ENCODE measurements at regions of chr11 and their contacts with region 1.

Region 1: GRCh38 chr11:62665075-62665598 is at the starts of genes C11orf98 and CSKMT:
- DNase-seq: peak; percentile 95
- H3K4me3 ChIP-seq: peak within 1 kb of the TSS; percentile 42 to 83 (median 59)
- H3K27ac ChIP-seq: peak within 1 kb of the TSS; percentile 44
- H3K4me1 ChIP-seq: peaks cover 16% of the 10 kb centered on the region
- H3K27me3 ChIP-seq: no peaks in the 10 kb centered on the region
- CTCF ChIP-seq: no peak
- POLR2A ChIP-seq: peak; percentile 100
- total RNA-seq, gene C11orf98: 58.7 and 61.0 TPM in 2 replicates
- total RNA-seq, gene CSKMT: 28.4 and 38.1 TPM in 2 replicates

Region 2: GRCh38 chr11:62591448-62592145 is 73.5 kb before region 1 on chr11 and contains the start of gene TUT1:
- CTCF ChIA-PET with region 1: interaction called, 7 read pairs
- POLR2A ChIA-PET with region 1: interaction called, 36 read pairs
- dilution Hi-C with region 1: no loop called
- intact Hi-C with region 1: no loop called
- DNase-seq: peak; percentile 99
- H3K4me3 ChIP-seq: peak within 1 kb of the TSS; percentile 67 to 87 (median 82)
- H3K27ac ChIP-seq: peak within 1 kb of the TSS; percentile 82
- H3K4me1 ChIP-seq: peaks cover 18% of the 10 kb centered on the region
- H3K27me3 ChIP-seq: no peaks in the 10 kb centered on the region
- CTCF ChIP-seq: no peak
- POLR2A ChIP-seq: peak; percentile 99
- total RNA-seq, gene TUT1: 16.9 and 17.8 TPM in 2 replicates

Region 3: DNA sequence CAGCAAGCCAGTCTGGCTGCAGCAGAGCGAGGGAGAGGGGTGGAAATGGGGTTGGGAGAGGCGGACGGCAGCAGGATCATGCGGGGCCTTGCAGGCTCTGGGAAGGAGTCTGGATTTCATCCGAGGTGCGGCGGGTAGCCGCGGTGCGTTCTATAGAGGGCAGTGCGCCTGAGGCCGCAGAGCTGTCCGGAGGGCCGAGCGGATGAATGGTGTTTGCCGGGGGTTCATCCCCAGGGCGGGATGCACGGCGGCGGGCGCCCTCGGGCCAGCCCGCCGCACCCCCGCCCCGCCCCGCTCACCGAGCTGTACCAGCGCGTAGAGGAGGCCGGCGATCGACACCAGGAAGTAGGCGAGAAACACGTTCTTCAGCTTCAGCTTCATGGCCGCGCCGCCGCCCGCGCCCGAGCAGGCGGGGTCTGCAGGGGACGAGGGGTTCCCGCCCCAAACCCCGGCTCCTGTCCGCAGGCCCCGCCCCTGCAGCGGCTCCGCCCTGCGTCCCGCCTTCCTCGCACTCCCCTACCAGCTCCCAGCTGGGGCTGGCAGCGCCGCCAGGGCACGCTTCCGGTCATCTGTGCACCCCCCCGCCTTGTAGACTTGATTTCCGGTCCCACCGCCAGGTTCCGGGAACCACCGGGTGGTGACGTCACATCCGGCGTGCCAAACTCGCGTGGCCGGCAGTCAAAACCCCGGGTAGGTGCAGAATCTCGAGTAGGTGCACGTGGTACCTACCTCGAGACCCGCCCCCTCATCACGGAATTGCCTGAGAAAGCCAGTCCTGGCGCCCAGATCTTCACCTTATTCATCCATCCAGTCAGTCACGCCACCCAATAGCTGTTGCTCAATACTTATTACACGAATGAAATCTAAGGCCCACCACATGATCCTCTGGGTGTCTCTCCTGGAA is 43.3 kb before region 1 on chr11 and contains the start of gene B3GAT3:
- CTCF ChIA-PET with region 1: interaction called, 3 read pairs
- POLR2A ChIA-PET with region 1: interaction called, 14 read pairs
- dilution Hi-C with region 1: no loop called
- intact Hi-C with region 1: no loop called
- DNase-seq: peak; percentile 96
- H3K4me3 ChIP-seq: peak within 1 kb of the TSS; percentile 14 to 80 (median 66)
- H3K27ac ChIP-seq: peak within 1 kb of the TSS; percentile 88
- H3K4me1 ChIP-seq: peaks cover 15% of the 10 kb centered on the region
- H3K27me3 ChIP-seq: no peaks in the 10 kb centered on the region
- CTCF ChIP-seq: no peak
- POLR2A ChIP-seq: peak; percentile 95
- total RNA-seq, gene B3GAT3: 31.6 and 35.0 TPM in 2 replicates

Region 4: DNA sequence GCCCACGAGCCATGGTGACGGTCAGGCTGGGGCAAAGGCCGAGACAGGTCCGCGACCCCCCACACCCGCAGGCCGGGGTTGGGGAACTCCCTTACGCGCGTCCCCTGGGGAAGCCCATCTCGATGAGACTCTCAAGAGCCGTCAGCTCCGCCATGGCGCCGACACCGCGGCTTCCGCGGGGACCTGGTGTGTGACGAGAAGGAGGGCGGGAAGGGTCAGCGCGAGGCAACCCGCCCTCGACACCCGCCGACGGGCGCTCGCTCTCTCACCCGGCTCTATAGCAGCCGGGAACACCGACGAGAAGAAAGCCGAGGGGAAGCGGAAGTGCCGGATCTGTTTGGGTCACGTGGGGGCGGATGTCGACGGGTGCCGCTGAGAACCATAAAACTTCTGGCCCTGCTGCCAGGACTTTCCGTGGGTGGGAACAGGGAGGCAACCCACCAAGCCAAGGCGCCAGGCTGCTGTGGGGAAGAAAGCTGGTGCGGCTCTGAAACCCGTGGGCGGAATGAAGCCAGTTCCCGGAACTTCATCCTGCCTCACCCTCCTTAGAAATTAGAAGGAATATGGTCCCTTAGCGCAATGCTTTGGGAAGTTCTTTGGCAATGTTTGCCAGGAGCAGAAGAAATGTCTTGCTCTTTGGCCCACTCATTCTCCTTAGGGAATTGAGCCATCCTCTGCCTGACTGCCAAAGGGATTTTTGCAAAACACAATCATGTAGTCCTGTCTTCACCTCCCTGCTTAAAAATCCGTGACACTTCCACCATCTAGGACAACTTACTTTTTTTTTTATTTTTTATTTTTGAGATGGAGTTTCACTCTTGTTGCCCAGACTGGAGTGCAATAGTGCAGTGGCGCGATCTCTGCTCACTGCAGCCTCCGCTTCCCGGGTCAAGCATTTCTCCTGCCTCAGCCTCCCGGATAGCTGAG is 13.9 kb after region 1 on chr11 and contains the start of gene UBXN1:
- CTCF ChIA-PET with region 1: interaction called, 30 read pairs
- POLR2A ChIA-PET with region 1: interaction called, 33 read pairs
- dilution Hi-C with region 1: no loop called
- intact Hi-C with region 1: loop called (anchors 2 kb)
- DNase-seq: peak; percentile 89
- H3K4me3 ChIP-seq: peak within 1 kb of the TSS; percentile 76 to 93 (median 79)
- H3K27ac ChIP-seq: peak within 1 kb of the TSS; percentile 74
- H3K4me1 ChIP-seq: peaks cover 11% of the 10 kb centered on the region
- H3K27me3 ChIP-seq: no peaks in the 10 kb centered on the region
- CTCF ChIP-seq: no peak
- POLR2A ChIP-seq: peak; percentile 84
- total RNA-seq, gene UBXN1: 112 and 113 TPM in 2 replicates

Region 5: DNA sequence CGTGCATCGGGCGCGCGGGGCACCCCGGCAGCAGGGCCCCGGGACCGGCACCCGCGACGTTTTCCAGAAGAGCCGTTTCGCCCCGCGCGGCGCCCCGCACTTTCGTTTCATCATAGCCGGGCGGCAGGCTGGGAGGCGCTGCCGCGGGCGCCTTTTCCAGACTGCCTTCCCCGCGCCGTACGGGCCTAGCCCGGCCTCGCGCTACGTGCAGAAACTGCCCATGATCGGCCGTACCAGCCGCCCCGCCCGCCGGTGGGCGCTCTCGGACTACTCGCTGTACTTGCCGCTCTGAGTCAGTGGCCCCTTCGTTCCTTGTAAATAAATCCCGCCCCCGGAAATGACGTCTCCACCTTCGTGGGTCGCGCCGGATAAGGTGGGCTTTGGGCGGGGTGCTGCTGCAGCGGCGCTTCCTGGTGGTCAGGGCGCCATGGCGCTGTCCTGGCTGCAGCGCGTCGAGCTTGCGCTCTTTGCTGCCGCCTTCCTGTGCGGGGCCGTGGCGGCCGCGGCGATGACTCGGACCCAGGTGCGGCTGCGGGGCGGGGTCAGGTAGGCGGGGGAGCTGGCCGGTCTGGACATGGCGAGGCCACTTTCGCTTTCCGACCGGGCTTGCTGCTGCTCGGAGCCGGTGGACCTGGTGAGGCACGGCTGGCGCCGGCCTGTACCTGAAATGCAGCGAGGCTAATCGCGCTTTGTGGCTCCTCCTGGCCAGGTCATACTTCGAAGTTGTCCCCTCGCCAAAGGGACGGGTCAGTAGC is 122.0 kb after region 1 on chr11 and contains the start of gene TMEM179B:
- CTCF ChIA-PET with region 1: interaction called, 10 read pairs
- POLR2A ChIA-PET with region 1: interaction called, 4 read pairs
- dilution Hi-C with region 1: no loop called
- intact Hi-C with region 1: no loop called
- DNase-seq: peak; percentile 97
- H3K4me3 ChIP-seq: peak within 1 kb of the TSS; percentile 1 to 95 (median 43)
- H3K27ac ChIP-seq: peak within 1 kb of the TSS; percentile 32
- H3K4me1 ChIP-seq: peaks cover 14% of the 10 kb centered on the region
- H3K27me3 ChIP-seq: no peaks in the 10 kb centered on the region
- CTCF ChIP-seq: peak; percentile 62 to 83
- POLR2A ChIP-seq: peak; percentile 97
- total RNA-seq, gene TMEM179B: 27.6 and 27.8 TPM in 2 replicates

Measured in endothelial cell of umbilical vein (primary cell).